Endothelial cell of umbilical vein (primary cell): ENCODE measurements at regions of chr4 and their contacts with region 1.

Region 1: DNA sequence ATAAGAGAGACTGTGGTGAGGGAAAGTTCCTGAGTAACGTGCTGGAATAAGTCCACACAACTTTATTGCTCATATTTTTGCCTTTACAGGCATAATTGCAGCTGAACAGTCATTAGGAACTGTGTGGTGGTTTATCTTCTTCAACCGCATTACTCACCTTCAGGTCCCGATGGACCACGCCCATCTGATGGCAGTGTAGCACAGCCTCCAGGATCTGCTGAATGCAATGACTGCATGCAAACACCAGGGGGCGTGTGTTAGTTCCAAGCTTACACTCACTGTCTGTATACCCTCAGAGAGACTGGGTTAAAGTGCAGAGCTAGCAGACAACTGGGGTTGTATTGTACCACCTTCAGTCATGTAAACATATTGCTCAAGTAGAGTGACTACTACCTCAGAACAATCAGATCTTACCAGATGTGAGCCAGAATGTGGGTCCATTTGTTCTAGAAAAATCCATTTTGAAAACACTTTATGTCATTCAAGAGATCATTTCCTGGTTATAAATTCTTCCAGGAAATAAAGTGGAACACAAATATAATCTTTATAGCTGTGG is 214.0 kb downstream of the CAMK2D start:
- DNase-seq: peak; percentile 96
- H3K4me3 ChIP-seq: no peak overlapping the region
- H3K27ac ChIP-seq: peak overlapping the region; percentile 4
- H3K4me1 ChIP-seq: peaks cover 3% of the 10 kb centered on the region
- H3K27me3 ChIP-seq: no peaks in the 10 kb centered on the region
- CTCF ChIP-seq: peak; percentile 92 to 98
- POLR2A ChIP-seq: no peak

Region 2: DNA sequence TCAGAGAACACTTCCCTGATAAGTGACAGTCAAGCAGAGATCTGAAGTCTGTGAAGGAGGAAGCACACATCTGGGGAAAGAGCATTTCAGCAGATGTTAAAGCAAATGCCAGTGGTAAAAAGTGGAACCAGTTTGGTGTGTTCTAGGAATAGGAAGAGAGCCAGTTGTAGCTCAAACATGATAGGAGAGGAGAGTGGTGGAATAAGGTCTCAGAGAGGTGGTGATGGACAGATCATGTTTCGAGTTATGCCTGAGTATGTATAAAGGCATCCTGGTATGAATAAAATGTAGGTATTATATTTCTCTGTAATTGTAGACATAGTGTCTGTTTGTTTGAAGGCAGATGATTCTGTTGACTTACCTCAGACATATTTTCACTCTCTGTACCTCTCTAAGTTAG is 821.5 kb before region 1 on chr4:
- CTCF ChIA-PET with region 1: no interaction called
- POLR2A ChIA-PET with region 1: no interaction called
- dilution Hi-C with region 1: no loop called
- intact Hi-C with region 1: no loop called
- DNase-seq: no peak
- H3K4me3 ChIP-seq: no peak overlapping the region
- H3K27ac ChIP-seq: no peak overlapping the region
- H3K4me1 ChIP-seq: no peaks in the 10 kb centered on the region
- H3K27me3 ChIP-seq: no peaks in the 10 kb centered on the region
- CTCF ChIP-seq: no peak
- POLR2A ChIP-seq: no peak

Region 3: DNA sequence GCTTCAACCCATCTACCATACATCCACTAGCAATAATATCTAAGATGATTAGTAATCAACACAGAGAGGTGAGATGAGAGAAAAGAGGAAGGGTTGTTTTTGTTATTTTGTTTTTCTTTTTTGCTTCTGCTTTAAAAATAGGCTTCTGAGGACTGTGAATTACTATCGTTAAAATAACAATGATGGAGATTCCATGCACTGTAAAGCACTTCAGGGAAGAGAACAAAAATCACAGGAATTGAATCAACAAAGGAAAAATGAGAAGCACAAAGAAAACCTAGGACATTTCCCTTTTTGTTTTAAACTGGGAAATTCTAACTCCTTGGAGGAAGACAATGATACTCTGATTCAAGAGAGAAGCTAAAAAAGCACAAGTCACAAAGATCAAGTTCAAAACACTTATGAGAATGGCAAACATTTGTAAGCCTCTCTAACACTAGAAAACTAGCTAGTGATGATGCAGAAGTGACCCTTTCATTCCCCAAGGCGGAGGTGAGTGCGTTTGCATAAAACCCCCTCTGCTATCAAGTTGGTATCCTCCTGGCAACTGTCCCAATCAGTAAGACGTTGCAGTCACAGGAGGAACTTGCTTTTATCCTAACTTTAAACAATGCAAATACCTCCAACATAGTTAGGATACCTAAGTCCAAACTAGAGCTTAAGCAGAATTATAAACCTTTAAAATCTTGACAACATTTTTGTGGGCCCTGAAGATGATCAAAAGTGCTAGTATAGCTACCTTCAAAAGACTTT is 94.5 kb before region 1 on chr4:
- CTCF ChIA-PET with region 1: interaction called, 5 read pairs
- POLR2A ChIA-PET with region 1: no interaction called
- dilution Hi-C with region 1: no loop called
- intact Hi-C with region 1: loop called (anchors 1 kb)
- DNase-seq: peak; percentile 95
- H3K4me3 ChIP-seq: peak overlapping the region in 1 of 3 experiments; percentile 29
- H3K27ac ChIP-seq: peak overlapping the region; percentile 78
- H3K4me1 ChIP-seq: peaks cover 17% of the 10 kb centered on the region
- H3K27me3 ChIP-seq: no peaks in the 10 kb centered on the region
- CTCF ChIP-seq: no peak
- POLR2A ChIP-seq: peak; percentile 25

Region 4: DNA sequence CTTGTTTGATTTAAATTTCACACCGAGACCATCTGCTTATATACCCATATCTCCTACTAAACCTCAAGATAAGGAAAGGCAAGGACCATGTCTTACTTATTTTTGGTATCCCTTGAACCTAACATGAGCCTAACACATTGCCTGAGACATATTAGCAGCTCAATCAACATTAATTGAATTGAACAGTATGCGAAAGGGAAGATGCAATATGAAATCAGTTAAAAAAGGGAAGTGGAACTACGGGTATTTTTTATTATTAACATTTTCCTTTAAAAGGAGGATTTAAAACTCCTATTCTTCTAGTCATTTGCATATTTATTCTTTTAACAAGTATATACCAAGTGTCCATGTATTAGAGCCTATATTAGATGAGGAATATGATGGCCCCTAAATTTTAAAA is 16.9 kb after region 1 on chr4:
- CTCF ChIA-PET with region 1: interaction called, 15 read pairs
- POLR2A ChIA-PET with region 1: no interaction called
- dilution Hi-C with region 1: no loop called
- intact Hi-C with region 1: loop called (anchors 1 kb)
- DNase-seq: no peak
- H3K4me3 ChIP-seq: no peak overlapping the region
- H3K27ac ChIP-seq: no peak overlapping the region
- H3K4me1 ChIP-seq: peaks cover 18% of the 10 kb centered on the region
- H3K27me3 ChIP-seq: no peaks in the 10 kb centered on the region
- CTCF ChIP-seq: no peak
- POLR2A ChIP-seq: no peak

Region 5: DNA sequence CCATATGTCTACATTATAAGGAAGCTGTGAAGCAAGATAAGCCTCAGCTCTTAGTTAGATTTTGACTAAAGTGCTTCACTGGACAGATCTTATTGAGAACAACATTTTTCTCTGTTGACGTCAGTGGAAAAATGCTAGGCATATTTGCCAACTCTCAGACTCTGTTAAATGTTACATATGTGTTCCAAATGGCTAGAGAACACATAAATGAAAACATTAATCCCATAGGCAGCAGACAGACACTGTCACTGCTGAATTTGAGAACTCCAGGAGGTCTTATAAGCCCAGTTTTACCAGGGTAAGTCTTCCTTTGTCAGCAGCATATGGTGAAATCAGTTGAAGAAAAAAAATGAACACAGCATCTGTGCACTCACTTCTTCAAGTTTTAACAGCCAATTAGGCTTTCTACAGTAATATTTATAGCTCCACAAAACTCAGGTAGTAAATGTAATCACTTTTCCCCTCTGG is 27.1 kb after region 1 on chr4:
- CTCF ChIA-PET with region 1: interaction called, 15 read pairs
- POLR2A ChIA-PET with region 1: no interaction called
- dilution Hi-C with region 1: no loop called
- intact Hi-C with region 1: no loop called
- DNase-seq: peak; percentile 88
- H3K4me3 ChIP-seq: no peak overlapping the region
- H3K27ac ChIP-seq: no peak overlapping the region
- H3K4me1 ChIP-seq: no peaks in the 10 kb centered on the region
- H3K27me3 ChIP-seq: no peaks in the 10 kb centered on the region
- CTCF ChIP-seq: no peak
- POLR2A ChIP-seq: no peak

Region 6: GRCh38 chr4:113738251-113738650 is 190.7 kb after region 1 on chr4:
- CTCF ChIA-PET with region 1: no interaction called
- POLR2A ChIA-PET with region 1: no interaction called
- dilution Hi-C with region 1: no loop called
- intact Hi-C with region 1: no loop called
- DNase-seq: no peak
- H3K4me3 ChIP-seq: no peak overlapping the region
- H3K27ac ChIP-seq: no peak overlapping the region
- H3K4me1 ChIP-seq: no peaks in the 10 kb centered on the region
- H3K27me3 ChIP-seq: no peaks in the 10 kb centered on the region
- CTCF ChIP-seq: no peak
- POLR2A ChIP-seq: no peak

Region 7: GRCh38 chr4:114378306-114378903 is 830.8 kb after region 1 on chr4:
- CTCF ChIA-PET with region 1: interaction called, 31 read pairs
- POLR2A ChIA-PET with region 1: no interaction called
- dilution Hi-C with region 1: no loop called
- intact Hi-C with region 1: no loop called
- DNase-seq: peak; percentile 37
- H3K4me3 ChIP-seq: no peak overlapping the region
- H3K27ac ChIP-seq: no peak overlapping the region
- H3K4me1 ChIP-seq: no peaks in the 10 kb centered on the region
- H3K27me3 ChIP-seq: peaks cover 0 to 2% of the 10 kb centered on the region in 2 experiments
- CTCF ChIP-seq: peak in 1 of 2 donors; percentile 21
- POLR2A ChIP-seq: no peak